ENCODE measurements at regions of chr11 and their contacts with region 1.

Region 1: DNA sequence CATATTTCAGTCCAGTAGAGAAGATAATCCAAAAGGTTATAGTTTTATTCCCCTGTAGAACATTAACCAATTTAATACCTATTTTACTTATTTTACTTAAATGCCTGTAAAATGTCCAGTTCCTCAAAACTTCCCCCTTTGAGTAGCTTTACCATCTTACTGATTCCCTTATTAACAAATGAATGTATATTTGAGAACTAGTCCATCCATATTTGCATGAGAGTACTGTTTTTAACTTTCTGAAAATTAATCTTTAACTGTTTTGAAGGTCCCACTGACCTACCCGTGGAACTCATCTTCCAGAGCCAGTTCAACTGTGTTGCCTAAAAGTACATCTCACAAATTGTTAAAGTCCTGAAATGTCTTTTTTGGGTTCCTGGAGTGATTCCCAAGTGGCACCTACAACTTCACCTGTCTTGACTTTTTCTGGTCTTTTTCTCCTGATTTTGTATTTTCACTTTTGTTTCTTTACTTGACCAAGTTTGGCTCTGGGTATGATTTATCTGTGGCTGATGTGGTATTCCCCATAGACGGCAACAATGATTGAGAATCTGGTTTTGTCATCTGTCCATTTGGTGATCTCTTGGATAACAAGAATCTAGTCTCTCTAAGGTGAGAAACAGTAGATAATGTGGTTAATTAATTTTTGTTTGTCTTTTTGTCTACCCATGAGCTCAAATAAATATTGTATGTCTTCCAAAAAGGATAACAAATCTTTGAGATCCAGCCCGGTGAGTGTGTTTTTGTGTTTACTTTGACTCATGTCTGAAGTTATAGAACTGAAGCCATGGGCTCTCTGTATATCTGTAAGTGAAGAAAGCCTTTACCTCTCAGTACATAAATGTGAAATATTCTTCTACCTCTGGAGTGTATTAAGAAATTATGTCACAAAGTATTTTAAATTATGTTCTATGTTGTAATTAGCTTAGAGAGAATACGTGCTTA is 174.2 kb downstream of the ETS1 start:
- DNase-seq: no peak
- ATAC-seq: peak; percentile 63
- H3K4me3 Mint-ChIP-seq: no peak overlapping the region
- H3K27ac Mint-ChIP-seq: peak overlapping the region; percentile 27
- H3K4me1 Mint-ChIP-seq: peaks cover 54% of the 10 kb centered on the region
- H3K27me3 Mint-ChIP-seq: no peaks in the 10 kb centered on the region
- CTCF ChIP-seq: no peak

Region 2: GRCh38 chr11:128399251-128400121 is 13.6 kb before region 1 on chr11:
- CTCF ChIA-PET with region 1: interaction called, 17 read pairs
- POLR2A ChIA-PET with region 1: interaction called, 3 read pairs
- intact Hi-C with region 1: no loop called
- DNase-seq: peak; percentile 12
- ATAC-seq: peak; percentile 71
- H3K4me3 Mint-ChIP-seq: no peak overlapping the region
- H3K27ac Mint-ChIP-seq: no peak overlapping the region
- H3K4me1 Mint-ChIP-seq: peaks cover 31% of the 10 kb centered on the region
- H3K27me3 Mint-ChIP-seq: no peaks in the 10 kb centered on the region
- CTCF ChIP-seq: no peak

Region 3: DNA sequence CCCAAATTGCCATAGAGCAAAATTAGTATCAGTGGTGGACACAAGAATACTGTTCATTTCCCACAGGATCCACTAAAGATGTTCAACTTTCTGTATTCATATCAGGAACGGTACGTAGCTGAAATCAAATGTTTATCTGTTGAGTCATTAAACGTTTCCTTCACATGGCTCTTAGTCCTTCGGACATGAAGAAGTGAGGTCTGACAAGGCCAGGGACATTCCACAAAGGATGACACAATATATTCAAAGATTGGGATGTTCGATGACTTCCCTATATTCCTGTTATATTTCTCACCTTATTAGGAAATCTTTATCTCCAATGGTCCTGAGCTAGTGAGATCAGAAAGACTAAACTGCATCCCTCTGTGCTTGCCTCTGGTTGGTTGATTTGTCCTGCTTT is 45.2 kb after region 1 on chr11:
- CTCF ChIA-PET with region 1: no interaction called
- POLR2A ChIA-PET with region 1: no interaction called
- intact Hi-C with region 1: no loop called
- DNase-seq: no peak
- ATAC-seq: no peak
- H3K4me3 Mint-ChIP-seq: no peak overlapping the region
- H3K27ac Mint-ChIP-seq: peak overlapping the region; percentile 22
- H3K4me1 Mint-ChIP-seq: peaks cover 76% of the 10 kb centered on the region
- H3K27me3 Mint-ChIP-seq: no peaks in the 10 kb centered on the region
- CTCF ChIP-seq: no peak

Region 4: GRCh38 chr11:128530118-128531074 is 117.3 kb after region 1 on chr11:
- CTCF ChIA-PET with region 1: no interaction called
- POLR2A ChIA-PET with region 1: no interaction called
- intact Hi-C with region 1: no loop called
- DNase-seq: peak; percentile 33
- ATAC-seq: no peak
- H3K4me3 Mint-ChIP-seq: no peak overlapping the region
- H3K27ac Mint-ChIP-seq: peak overlapping the region; percentile 26
- H3K4me1 Mint-ChIP-seq: peaks cover 59% of the 10 kb centered on the region
- H3K27me3 Mint-ChIP-seq: no peaks in the 10 kb centered on the region
- CTCF ChIP-seq: no peak